AG04449 (cell line): ENCODE measurements at regions of chr3 and their contacts with region 1.

Region 1: DNA sequence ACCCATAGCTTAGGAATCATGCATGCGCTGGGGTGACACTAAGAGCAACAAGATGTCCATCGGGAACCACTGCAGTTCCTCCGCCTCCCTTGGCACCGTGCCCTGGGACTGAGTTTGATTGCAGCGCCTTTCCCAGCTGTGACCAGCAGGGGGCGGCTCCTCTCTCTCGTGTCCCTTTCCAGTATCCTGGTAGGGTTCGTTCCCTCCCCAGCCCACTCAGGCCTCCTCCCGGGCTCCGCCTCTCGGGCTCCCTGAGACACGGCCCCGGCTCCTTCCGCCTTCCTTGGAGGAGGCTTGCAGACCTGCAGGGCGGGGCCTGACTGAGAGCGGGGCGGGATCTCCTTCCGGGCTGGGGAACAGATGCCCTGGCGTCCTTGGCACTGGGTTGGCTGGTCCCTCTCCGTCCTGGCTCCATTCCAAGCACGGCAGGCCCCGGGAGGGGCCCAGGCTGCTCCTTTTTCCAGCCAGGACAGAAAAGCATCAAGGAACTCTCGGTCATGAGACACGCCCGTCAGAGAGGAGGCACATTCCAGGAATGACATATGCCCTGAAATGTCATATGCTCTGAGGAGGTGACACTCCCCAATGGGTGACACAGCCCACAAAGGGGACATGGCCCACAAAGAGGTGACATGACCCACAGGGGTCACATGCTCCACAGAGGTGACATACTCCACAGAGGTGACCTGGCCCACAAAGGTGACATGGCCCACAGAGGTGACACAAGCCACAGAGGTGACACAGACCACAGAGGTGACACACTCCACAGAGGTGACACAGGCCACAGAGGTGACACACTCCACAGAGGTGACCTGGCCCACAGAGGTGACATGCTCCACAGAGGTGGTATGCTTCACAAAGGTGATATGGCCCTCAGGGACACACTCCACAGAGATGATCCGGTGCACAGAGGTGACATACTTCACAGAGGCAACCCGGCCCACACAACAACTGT is 79.0 kb downstream of the ABHD5 start:
- DNase-seq: peak; percentile 73
- H3K4me3 ChIP-seq: peak overlapping the region; percentile 44
- CTCF ChIP-seq: peak; percentile 92

Region 2: DNA sequence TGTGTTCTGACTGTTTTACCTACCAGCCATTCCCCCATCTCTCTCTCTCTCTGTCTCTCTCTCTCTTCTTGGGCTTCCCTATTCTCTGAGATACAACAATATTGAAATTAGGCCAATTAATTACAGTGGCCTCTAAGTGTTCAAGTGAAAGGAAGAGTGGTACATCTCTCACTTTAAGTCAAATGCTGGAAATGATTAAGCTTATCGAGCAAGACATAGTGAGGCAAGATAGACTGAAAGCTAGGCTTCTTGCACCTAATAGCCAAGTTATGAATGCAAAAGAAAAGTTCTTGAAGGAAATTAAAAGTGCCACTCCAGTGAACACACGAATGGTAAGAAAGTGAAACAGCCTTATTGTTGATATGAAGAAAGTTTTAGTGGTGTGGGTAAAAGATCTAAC is 462.1 kb before region 1 on chr3:
- CTCF ChIA-PET with region 1: no interaction called
- POLR2A ChIA-PET with region 1: no interaction called
- DNase-seq: no peak
- H3K4me3 ChIP-seq: no peak overlapping the region
- CTCF ChIP-seq: no peak

Region 3: DNA sequence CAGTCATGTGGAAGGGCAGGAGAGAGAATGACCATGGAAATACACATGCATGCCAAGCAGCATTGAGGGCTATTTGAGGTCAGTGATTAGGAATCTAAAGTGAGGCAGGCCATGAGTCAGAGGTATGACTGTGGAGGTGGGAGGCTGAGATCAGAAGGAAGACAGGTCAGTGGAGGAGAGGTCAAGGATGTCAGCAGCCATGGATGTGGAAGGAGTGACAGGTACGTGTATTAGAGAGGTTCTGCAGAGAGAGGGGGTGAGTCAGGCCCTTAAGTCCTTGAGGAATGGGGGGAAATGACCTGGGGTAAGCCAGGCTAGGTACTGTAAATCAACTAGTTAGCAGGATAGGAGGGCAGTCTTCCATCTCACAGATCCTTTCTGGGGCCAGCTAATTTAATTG is 314.5 kb before region 1 on chr3:
- CTCF ChIA-PET with region 1: no interaction called
- POLR2A ChIA-PET with region 1: no interaction called
- DNase-seq: peak; percentile 4
- H3K4me3 ChIP-seq: no peak overlapping the region
- CTCF ChIP-seq: no peak

Region 4: DNA sequence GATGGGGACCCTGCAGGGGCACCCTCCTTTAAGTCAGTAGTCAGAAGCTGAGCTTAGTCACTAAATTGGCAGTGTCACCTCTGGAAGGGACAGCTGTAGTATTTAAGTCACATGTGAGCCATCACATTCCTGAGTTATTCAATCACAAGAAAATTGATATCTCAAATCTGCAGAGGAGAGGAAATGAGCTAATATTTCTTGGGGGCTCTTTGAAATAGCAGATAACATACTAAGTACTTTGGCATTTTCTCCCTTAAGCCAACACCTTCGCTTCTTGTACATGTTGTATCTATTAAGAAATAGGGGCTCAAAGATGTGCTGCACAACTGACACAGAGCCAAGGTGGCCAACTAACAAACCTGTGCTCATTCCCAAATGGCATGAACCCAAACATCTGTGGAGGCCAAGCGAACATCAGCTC is 16.0 kb before region 1 on chr3:
- CTCF ChIA-PET with region 1: interaction called, 29 read pairs
- POLR2A ChIA-PET with region 1: interaction called, 4 read pairs
- DNase-seq: no peak
- H3K4me3 ChIP-seq: no peak overlapping the region
- CTCF ChIP-seq: no peak

Region 5: GRCh38 chr3:43779850-43780249 is 10.1 kb after region 1 on chr3:
- CTCF ChIA-PET with region 1: interaction called, 24 read pairs
- POLR2A ChIA-PET with region 1: no interaction called
- DNase-seq: no peak
- H3K4me3 ChIP-seq: no peak overlapping the region
- CTCF ChIP-seq: no peak

Region 6: GRCh38 chr3:43794776-43795175 is 25.0 kb after region 1 on chr3:
- CTCF ChIA-PET with region 1: interaction called, 10 read pairs
- POLR2A ChIA-PET with region 1: no interaction called
- DNase-seq: peak; percentile 49
- H3K4me3 ChIP-seq: no peak overlapping the region
- CTCF ChIP-seq: no peak

Region 7: GRCh38 chr3:43843386-43843785 is 73.6 kb after region 1 on chr3:
- CTCF ChIA-PET with region 1: no interaction called
- POLR2A ChIA-PET with region 1: no interaction called
- DNase-seq: no peak
- H3K4me3 ChIP-seq: no peak overlapping the region
- CTCF ChIP-seq: no peak

Region 8: GRCh38 chr3:43996379-43997301 is 226.9 kb after region 1 on chr3:
- CTCF ChIA-PET with region 1: interaction called, 15 read pairs
- POLR2A ChIA-PET with region 1: interaction called, 3 read pairs
- DNase-seq: no peak
- H3K4me3 ChIP-seq: peak overlapping the region; percentile 89
- CTCF ChIP-seq: peak; percentile 61